Activated T-helper 2 cell treated with anti-CD3 and anti-CD28 coated beads, Interferon-gamma antibody, Interleukin-2, Interleukin-4, amounts not matched to agents 10 μg/mL and 5 μg/mL and 100 μg/mL, durations not matched to agents 14 hours and 24 hours and 36 hours (primary cell): ENCODE measurements at regions of chr3 and their contacts with region 1.

Region 1: GRCh38 chr3:188154014-188154808 is at the start of gene LPP:
- DNase-seq: peak; percentile 87
- H3K4me3 Mint-ChIP-seq: peak within 1 kb of the TSS; percentile 91
- H3K27ac Mint-ChIP-seq: peak within 1 kb of the TSS; percentile 93
- H3K4me1 Mint-ChIP-seq: peaks cover 63% of the 10 kb centered on the region
- H3K27me3 Mint-ChIP-seq: no peaks in the 10 kb centered on the region
- total RNA-seq, gene LPP: 54.5 and 59.0 TPM in 2 replicates

Region 2: GRCh38 chr3:188061133-188061532 is 93.1 kb before region 1 on chr3:
- intact Hi-C with region 1: loop called (anchors 1 kb)
- DNase-seq: peak; percentile 59
- H3K4me3 Mint-ChIP-seq: peak overlapping the region; percentile 51
- H3K27ac Mint-ChIP-seq: peak overlapping the region; percentile 80
- H3K4me1 Mint-ChIP-seq: peaks cover 38% of the 10 kb centered on the region
- H3K27me3 Mint-ChIP-seq: no peaks in the 10 kb centered on the region

Region 3: DNA sequence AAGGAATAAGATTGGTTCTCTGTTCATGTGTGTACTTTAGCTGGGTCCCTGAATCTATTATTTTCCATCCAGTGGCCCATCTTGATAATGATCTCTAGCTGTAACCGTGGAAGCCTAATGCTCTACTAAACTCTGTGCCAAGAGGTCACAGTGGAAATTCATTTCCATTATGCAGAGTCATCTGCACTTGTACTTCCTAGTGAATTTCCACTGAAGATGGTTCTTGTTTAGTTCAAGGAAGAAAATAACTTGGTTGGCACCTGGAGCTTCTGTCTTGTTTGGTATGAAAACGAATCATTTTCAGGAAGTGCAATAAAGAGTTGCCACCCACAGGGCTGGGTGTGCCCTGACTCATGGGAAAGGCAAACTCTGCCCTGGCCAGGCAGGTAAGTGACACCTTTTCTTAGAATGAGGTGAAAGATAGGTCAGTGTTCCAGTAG is 10.1 kb after region 1 on chr3:
- intact Hi-C with region 1: loop called (anchors 1 kb)
- DNase-seq: no peak
- H3K4me3 Mint-ChIP-seq: no peak overlapping the region
- H3K27ac Mint-ChIP-seq: peak overlapping the region; percentile 54
- H3K4me1 Mint-ChIP-seq: peaks cover 47% of the 10 kb centered on the region
- H3K27me3 Mint-ChIP-seq: no peaks in the 10 kb centered on the region

Region 4: DNA sequence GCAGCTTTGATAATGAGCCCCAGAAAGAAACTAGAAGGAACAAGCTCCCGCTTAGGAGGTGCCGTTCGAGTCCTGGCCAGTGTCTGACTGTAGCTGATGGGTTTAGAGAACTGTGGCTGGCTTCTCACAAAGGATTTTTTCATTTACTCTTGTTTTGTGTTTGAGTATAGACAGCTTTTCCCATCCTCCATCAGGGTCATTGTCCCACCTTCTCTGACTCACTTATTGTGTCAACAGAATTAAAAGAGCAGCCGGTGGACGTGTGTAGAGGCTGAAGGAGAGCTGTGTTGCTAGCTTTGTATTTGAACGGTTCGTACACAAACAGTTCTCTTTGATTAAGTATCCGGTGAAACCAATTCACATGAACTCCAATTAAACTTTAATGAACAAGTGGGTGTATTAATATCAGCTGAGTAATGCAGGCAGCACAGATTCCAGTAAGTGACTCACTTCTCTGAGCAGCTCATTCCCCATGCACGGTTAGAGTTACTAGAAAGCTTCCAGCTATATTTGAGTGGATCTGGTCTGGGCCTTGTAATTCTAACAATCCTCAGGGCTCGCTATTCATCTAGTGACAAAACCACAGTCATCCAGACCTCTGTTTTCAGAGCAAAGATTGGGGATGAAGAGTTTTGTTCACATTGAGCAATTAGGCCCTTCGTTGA is 140.7 kb after region 1 on chr3:
- intact Hi-C with region 1: loop called (anchors 5 kb)
- DNase-seq: no peak
- H3K4me3 Mint-ChIP-seq: no peak overlapping the region
- H3K27ac Mint-ChIP-seq: no peak overlapping the region
- H3K4me1 Mint-ChIP-seq: peaks cover 66% of the 10 kb centered on the region
- H3K27me3 Mint-ChIP-seq: no peaks in the 10 kb centered on the region